GM12878 (cell line): ENCODE measurements at regions of chr13 and their contacts with region 1.

Region 1: DNA sequence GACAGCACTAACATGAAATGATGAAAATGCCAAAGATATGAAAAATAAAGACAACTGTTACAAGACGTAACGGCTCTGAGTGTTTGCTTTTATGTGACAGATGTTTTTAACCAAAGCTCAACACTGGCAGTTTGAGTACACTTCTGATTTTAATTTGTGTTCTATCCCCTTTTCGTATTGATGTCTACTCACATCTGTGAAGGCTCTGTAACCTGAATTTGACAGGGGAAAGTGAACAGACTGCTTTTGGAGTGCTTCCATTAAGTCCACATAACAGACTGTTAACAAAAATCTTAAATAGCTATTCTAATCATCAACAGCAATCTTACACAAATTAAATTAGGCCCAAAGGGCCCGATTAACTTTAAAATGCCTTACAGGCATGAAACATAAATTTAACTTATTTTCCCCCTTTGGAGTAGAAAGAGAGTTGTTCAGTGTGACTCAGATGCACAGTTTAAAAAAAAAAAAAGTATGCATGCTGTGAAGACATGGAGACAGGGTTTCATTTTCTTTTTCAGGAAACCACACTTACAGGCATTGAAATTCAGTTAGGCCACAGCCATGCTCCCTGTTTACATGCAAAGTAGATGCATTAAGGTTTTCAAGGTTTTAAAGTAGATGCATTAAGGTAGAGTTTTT is 16.3 kb upstream of the RNASEH2B start:
- DNase-seq: no peak
- ATAC-seq: peak; percentile 88
- H3K4me3 ChIP-seq: peak overlapping the region; percentile 50; the same call in 1 of the 2 replicates
- H3K27ac ChIP-seq: peak overlapping the region; percentile 93
- H3K4me1 ChIP-seq: peaks cover 34% of the 10 kb centered on the region
- H3K27me3 ChIP-seq: no peaks in the 10 kb centered on the region
- CTCF ChIP-seq: no peak
- EP300 ChIP-seq: peak; percentile 62 to 78; a peak in 3 of 4 replicates
- POLR2A ChIP-seq: no peak
- RAD21 ChIP-seq: no peak

Region 2: GRCh38 chr13:50561739-50562138 is 331.6 kb before region 1 on chr13:
- CTCF ChIA-PET with region 1: no interaction called
- POLR2A ChIA-PET with region 1: no interaction called
- RAD21 ChIA-PET with region 1: no interaction called
- SMC1A ChIA-PET with region 1: no interaction called
- in situ Hi-C with region 1: no loop called
- intact Hi-C with region 1: no loop called
- DNase-seq: no peak
- ATAC-seq: no peak
- H3K4me3 ChIP-seq: no peak overlapping the region
- H3K27ac ChIP-seq: no peak overlapping the region
- H3K4me1 ChIP-seq: no peaks in the 10 kb centered on the region
- H3K27me3 ChIP-seq: no peaks in the 10 kb centered on the region
- CTCF ChIP-seq: no peak
- EP300 ChIP-seq: no peak
- POLR2A ChIP-seq: no peak
- RAD21 ChIP-seq: no peak

Region 3: DNA sequence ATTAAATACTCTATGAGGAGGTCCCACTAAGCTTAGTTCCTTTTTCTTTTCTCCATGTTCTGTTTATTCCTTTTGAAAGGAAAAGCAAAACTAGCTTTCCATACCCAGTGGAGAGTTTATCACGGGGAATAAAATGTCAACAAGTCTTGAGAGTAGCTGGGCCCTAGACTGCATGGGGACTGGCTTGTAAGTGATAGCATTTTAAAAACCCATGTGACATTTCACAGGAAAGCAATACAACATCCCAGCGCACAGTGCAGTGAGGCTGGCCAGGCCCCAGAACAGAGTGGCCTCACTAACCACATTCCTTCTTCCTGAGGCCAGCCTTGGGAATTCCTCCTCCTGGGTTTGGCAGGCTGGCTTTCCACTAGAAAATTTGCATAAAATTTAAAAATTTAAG is 199.6 kb before region 1 on chr13:
- CTCF ChIA-PET with region 1: no interaction called
- POLR2A ChIA-PET with region 1: no interaction called
- RAD21 ChIA-PET with region 1: no interaction called
- SMC1A ChIA-PET with region 1: no interaction called
- in situ Hi-C with region 1: no loop called
- intact Hi-C with region 1: no loop called
- DNase-seq: no peak
- ATAC-seq: no peak
- H3K4me3 ChIP-seq: no peak overlapping the region
- H3K27ac ChIP-seq: no peak overlapping the region
- H3K4me1 ChIP-seq: no peaks in the 10 kb centered on the region
- H3K27me3 ChIP-seq: no peaks in the 10 kb centered on the region
- CTCF ChIP-seq: no peak
- EP300 ChIP-seq: no peak
- POLR2A ChIP-seq: no peak
- RAD21 ChIP-seq: no peak

Region 4: DNA sequence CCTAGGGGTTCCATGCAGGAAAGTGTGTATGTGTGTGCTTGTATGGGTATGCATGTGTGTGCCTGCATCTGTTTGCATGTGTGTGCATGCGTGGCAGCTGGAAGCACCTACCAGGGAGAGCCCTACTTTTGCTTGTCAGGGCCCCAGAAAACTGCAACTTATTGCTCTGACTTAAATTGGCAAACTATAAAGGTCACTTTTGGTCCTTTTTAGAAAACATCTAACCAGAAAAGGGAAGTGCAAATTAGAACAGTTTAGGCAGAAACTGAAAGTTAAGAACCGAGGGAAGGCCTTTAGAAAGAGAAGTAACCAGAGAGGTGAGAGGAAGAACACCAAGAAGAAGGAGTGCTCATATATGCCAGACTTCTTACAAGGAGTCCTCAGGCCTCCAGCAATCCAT is 82.3 kb before region 1 on chr13:
- CTCF ChIA-PET with region 1: interaction called, 7 read pairs
- POLR2A ChIA-PET with region 1: no interaction called
- RAD21 ChIA-PET with region 1: interaction called, 5 read pairs
- SMC1A ChIA-PET with region 1: interaction called, 12 read pairs
- in situ Hi-C with region 1: no loop called
- intact Hi-C with region 1: loop called (anchors 2 kb)
- DNase-seq: peak; percentile 76
- ATAC-seq: peak; percentile 97
- H3K4me3 ChIP-seq: peak overlapping the region; percentile 25; the same call in 1 of the 2 replicates
- H3K27ac ChIP-seq: peak overlapping the region; percentile 67
- H3K4me1 ChIP-seq: peaks cover 20% of the 10 kb centered on the region
- H3K27me3 ChIP-seq: no peaks in the 10 kb centered on the region
- CTCF ChIP-seq: no peak
- EP300 ChIP-seq: peak; percentile 67 to 75
- POLR2A ChIP-seq: no peak
- RAD21 ChIP-seq: peak; percentile 16; the same call in 1 of the 2 replicates

Region 5: GRCh38 chr13:50873467-50873866 is 19.9 kb before region 1 on chr13:
- CTCF ChIA-PET with region 1: interaction called, 9 read pairs
- POLR2A ChIA-PET with region 1: no interaction called
- RAD21 ChIA-PET with region 1: no interaction called
- SMC1A ChIA-PET with region 1: interaction called, 17 read pairs
- in situ Hi-C with region 1: no loop called
- intact Hi-C with region 1: no loop called
- DNase-seq: no peak
- ATAC-seq: no peak
- H3K4me3 ChIP-seq: no peak overlapping the region
- H3K27ac ChIP-seq: no peak overlapping the region
- H3K4me1 ChIP-seq: no peaks in the 10 kb centered on the region
- H3K27me3 ChIP-seq: no peaks in the 10 kb centered on the region
- CTCF ChIP-seq: no peak
- EP300 ChIP-seq: no peak
- POLR2A ChIP-seq: no peak
- RAD21 ChIP-seq: no peak